ENCODE measurements at regions of chr16 and their contacts with region 1.

Region 1: DNA sequence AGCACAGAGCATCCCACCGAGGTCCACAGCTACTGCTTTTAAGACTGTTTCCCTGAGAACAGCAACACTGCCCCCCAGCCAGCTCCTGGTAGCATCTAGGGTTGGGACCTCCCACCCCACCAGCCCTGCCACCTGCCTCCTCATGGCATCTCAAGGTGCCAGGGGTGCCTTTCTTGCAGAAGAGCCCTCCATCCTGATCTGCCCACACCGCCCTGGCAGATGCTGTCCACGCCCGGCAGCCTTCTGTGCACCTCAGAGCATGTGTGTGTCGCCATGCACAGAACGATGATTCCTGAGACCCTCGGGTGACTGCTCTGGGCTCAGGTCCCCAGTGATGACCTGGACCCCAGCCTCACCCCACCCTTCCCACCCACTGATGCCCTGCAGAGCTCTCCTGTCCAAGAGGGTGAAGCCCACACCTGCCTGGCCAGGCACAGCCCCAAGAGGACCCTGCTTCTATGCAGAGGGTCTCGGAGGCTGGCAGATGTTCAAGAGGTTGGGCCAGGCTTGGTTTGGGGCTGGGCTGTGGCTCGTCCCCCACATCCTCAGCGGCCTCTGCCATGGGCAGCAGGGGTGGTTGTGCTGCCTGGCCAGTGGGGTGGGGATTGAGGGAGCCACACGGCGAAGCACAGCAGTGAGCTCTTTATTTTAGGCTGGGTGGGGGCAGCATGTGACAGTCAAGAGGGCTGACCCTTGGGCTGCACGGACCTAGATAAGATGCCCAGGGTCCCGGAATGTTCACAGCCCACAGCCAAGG is 5.2 kb upstream of the SPATA2L start:
- DNase-seq: no peak
- H3K4me3 ChIP-seq: no peak overlapping the region
- H3K27ac ChIP-seq: no peak overlapping the region
- H3K4me1 ChIP-seq: peaks cover 0 to 4% of the 10 kb centered on the region in 2 donors
- H3K27me3 ChIP-seq: no peaks in the 10 kb centered on the region
- CTCF ChIP-seq: no peak

Region 2: GRCh38 chr16:89793955-89794354 is 87.3 kb after region 1 on chr16:
- intact Hi-C with region 1: loop called (anchors 1 kb)
- DNase-seq: no peak
- H3K4me3 ChIP-seq: no peak overlapping the region
- H3K27ac ChIP-seq: no peak overlapping the region
- H3K4me1 ChIP-seq: no peaks in the 10 kb centered on the region
- H3K27me3 ChIP-seq: no peaks in the 10 kb centered on the region
- CTCF ChIP-seq: no peak